ENCODE measurements at regions of chr17 and their contacts with region 1.

Region 1: DNA sequence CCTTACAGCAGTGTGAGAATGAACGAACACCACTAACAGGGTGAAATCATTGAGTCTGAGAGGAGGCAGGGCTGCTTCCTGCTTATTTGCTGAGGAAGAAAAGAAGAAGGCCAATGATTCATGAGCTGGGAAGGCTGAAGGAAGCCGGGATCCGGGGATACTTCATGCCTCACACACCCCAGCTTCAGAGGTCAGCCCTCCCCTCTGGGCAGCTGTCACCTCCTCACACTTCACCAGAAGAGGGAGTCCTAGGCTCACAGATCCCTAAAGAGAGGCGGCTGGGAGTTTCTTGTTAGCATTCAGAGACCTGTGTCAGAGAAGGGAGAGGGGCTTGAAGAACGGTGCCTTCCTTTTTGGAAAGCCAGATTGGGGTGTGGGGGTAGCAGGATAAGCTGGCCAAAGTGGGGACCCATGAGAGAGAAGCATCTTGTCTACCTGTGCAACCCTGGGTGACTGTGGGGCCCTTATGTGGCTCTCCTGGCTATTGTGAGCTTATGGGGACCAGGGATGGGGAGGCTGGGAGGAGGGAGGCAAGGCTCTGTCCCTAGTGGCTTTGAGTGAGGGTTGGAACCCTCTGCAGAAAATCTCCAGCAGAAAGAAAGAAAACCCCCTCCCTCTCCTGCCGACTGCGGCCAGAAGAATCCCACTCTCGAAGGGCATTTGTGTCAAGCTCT is 94.6 kb downstream of the RGS9 start:
- DNase-seq: peak; percentile 83
- H3K4me3 Mint-ChIP-seq: no peak overlapping the region
- H3K27ac Mint-ChIP-seq: no peak overlapping the region
- H3K4me1 Mint-ChIP-seq: no peaks in the 10 kb centered on the region
- H3K27me3 Mint-ChIP-seq: peaks cover 19% of the 10 kb centered on the region
- CTCF ChIP-seq: peak; percentile 83

Region 2: GRCh38 chr17:65163990-65164495 is 67.8 kb before region 1 on chr17:
- CTCF ChIA-PET with region 1: no interaction called
- POLR2A ChIA-PET with region 1: no interaction called
- intact Hi-C with region 1: no loop called
- DNase-seq: peak; percentile 55
- H3K4me3 Mint-ChIP-seq: no peak overlapping the region
- H3K27ac Mint-ChIP-seq: peak overlapping the region; percentile 49
- H3K4me1 Mint-ChIP-seq: peaks cover 12% of the 10 kb centered on the region
- H3K27me3 Mint-ChIP-seq: no peaks in the 10 kb centered on the region
- CTCF ChIP-seq: no peak

Region 3: DNA sequence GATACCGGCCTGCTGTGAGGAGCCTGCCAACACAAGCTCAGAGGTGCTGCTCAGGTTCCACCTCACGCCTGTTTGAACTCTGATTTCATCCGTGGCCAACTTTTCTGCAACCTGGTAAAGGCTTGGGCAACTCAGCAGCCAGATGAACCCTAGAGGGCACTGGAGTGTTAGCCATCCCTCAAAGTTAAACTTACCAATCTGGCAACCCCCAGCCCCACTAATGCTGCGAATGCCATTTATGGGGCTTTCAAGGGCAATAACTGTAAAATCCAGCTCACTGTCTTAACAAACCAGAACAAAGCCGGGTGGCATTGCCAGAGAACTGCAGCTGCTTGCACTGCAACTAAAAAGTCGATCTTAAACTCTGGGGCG is 224.2 kb after region 1 on chr17:
- CTCF ChIA-PET with region 1: interaction called, 4 read pairs
- POLR2A ChIA-PET with region 1: no interaction called
- intact Hi-C with region 1: loop called (anchors 10 kb)
- DNase-seq: peak; percentile 30
- H3K4me3 Mint-ChIP-seq: no peak overlapping the region
- H3K27ac Mint-ChIP-seq: no peak overlapping the region
- H3K4me1 Mint-ChIP-seq: peaks cover 8% of the 10 kb centered on the region
- H3K27me3 Mint-ChIP-seq: no peaks in the 10 kb centered on the region
- CTCF ChIP-seq: no peak

Region 4: GRCh38 chr17:65794572-65794971 is 562.8 kb after region 1 on chr17:
- CTCF ChIA-PET with region 1: interaction called, 16 read pairs
- POLR2A ChIA-PET with region 1: no interaction called
- intact Hi-C with region 1: loop called (anchors 5 kb)
- DNase-seq: peak; percentile 65
- H3K4me3 Mint-ChIP-seq: no peak overlapping the region
- H3K27ac Mint-ChIP-seq: no peak overlapping the region
- H3K4me1 Mint-ChIP-seq: no peaks in the 10 kb centered on the region
- H3K27me3 Mint-ChIP-seq: no peaks in the 10 kb centered on the region
- CTCF ChIP-seq: peak; percentile 64

Region 5: DNA sequence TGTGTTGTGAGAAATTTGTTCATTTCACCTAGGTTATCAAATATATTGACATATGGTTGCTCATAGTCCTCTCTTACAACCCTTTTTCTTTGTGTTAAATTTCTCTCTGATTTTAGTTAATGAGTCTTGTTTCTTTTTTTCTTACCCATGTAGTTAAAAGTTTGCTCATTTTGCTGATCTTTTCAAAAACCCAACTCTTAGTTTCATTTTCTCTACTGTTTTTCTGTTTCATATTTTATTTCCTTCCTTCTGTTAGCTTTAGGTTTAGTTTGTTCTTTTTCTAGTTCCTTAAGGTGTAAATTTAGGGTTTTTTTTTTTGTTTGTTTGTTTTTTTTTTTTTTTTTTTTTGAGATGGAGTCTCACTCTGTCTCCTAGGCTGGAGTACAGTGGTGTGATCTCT is 917.8 kb after region 1 on chr17:
- CTCF ChIA-PET with region 1: interaction called, 11 read pairs
- POLR2A ChIA-PET with region 1: no interaction called
- intact Hi-C with region 1: no loop called
- DNase-seq: no peak
- H3K4me3 Mint-ChIP-seq: no peak overlapping the region
- H3K27ac Mint-ChIP-seq: no peak overlapping the region
- H3K4me1 Mint-ChIP-seq: no peaks in the 10 kb centered on the region
- H3K27me3 Mint-ChIP-seq: no peaks in the 10 kb centered on the region
- CTCF ChIP-seq: no peak

Measured in MCF 10A (cell line).